AG04449 (cell line): ENCODE measurements at regions of chr9 and their contacts with region 1.

Region 1: DNA sequence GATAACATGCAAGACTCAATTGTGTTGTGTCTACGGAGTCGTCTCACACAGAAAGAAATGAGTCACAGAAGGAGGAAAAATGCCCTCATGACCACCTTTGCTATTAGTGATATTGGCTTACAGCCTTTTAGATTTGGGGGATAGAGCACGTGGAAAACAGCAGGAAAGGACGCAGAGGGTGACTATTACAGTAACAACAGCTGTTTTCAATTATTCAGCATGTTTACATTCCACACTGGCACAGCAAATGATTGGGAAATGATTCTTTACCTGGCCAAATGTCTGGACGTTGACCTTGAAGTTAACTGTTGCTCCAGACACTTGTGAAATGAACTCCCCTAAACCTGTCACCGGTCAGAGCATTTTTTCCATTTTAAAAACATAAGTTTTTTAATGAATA is 46.8 kb downstream of the APTX start:
- DNase-seq: peak; percentile 37
- H3K4me3 ChIP-seq: no peak overlapping the region
- CTCF ChIP-seq: no peak

Region 2: GRCh38 chr9:32801530-32801929 is 153.1 kb before region 1 on chr9:
- CTCF ChIA-PET with region 1: no interaction called
- POLR2A ChIA-PET with region 1: no interaction called
- DNase-seq: no peak
- H3K4me3 ChIP-seq: no peak overlapping the region
- CTCF ChIP-seq: no peak

Region 3: DNA sequence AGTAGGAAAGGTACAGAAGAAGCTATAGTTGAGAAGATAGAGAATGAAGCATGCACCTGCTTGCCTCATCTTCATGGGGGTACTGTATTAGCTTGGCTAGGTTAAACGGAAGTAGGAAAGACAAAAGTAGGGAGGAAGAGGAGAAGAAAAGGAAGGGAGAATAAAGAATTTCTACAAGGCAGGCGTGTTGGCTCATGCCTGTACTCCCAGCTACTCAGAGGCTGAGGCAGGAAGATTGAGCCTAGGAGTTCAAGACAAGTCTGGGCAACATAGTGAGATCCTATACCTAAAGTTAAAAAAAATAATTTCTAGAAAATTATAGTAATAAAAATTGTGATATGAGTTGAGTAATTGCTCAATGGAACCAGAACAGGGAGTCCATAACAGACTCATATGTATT is 15.1 kb before region 1 on chr9:
- CTCF ChIA-PET with region 1: no interaction called
- POLR2A ChIA-PET with region 1: no interaction called
- DNase-seq: no peak
- H3K4me3 ChIP-seq: no peak overlapping the region
- CTCF ChIP-seq: no peak

Region 4: GRCh38 chr9:32968101-32969011 is 13.7 kb after region 1 on chr9:
- CTCF ChIA-PET with region 1: interaction called, 14 read pairs
- POLR2A ChIA-PET with region 1: no interaction called
- DNase-seq: no peak
- H3K4me3 ChIP-seq: no peak overlapping the region
- CTCF ChIP-seq: peak; percentile 51